Lower lobe of right lung (tissue), 2 donors: ENCODE measurements at regions of chr19 and their contacts with region 1.

Region 1: GRCh38 chr19:16185123-16185767 is at the start of gene FAM32A:
- DNase-seq: peak; percentile 98
- ATAC-seq: peak; percentile 98
- H3K4me3 ChIP-seq: peak within 1 kb of the TSS; percentile 93
- H3K27ac ChIP-seq: peak within 1 kb of the TSS; percentile 90
- H3K4me1 ChIP-seq: peaks cover 22% of the 10 kb centered on the region
- H3K27me3 ChIP-seq: no peaks in the 10 kb centered on the region
- CTCF ChIP-seq: peak; percentile 36
- total RNA-seq, gene FAM32A: 59.9 TPM

Region 2: DNA sequence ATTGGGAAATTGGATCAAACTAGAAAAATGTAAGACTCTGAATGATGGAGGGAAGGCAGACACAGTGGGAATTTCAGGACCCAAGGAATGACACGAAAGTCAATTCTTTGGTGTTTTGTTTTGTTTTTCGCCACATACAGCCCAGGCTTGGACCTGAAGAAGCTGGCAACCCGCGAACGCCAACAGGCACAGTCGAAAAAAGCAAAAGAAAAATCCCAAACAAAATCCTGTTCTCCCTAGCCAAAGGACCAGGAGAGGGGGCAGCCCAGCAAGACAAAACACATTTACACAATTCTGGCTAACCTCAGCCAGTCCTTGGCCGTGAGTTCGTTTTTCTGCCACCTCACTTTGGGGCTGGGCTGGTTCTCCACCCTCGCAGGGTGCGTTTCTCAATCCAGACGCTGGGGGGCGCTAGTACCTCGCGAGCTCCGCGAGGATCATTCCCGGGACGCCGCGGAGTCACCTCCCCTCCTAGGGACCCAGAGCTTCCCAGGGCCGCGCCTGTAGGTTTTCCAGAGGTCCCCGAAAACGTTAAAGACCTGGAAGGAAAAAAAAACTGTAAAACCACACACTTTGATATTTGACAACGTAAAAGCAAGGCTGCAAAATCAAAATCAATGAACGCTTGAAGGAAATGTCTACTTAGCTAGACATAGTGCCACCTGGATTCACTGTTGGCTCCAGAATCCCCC is 143.8 kb before region 1 on chr19:
- intact Hi-C with region 1: loop called (anchors 10 kb)
- DNase-seq: peak; percentile 86
- ATAC-seq: peak; percentile 91 to 94
- H3K4me3 ChIP-seq: no peak overlapping the region
- H3K27ac ChIP-seq: no peak overlapping the region
- H3K4me1 ChIP-seq: peaks cover 15% of the 10 kb centered on the region
- H3K27me3 ChIP-seq: no peaks in the 10 kb centered on the region
- CTCF ChIP-seq: peak; percentile 99